ENCODE measurements at regions of chr20 and their contacts with region 1.

Region 1: GRCh38 chr20:13784893-13785715 is at the starts of genes ESF1 and NDUFAF5:
- DNase-seq: peak; percentile 92
- ATAC-seq: peak; percentile 88
- H3K4me3 Mint-ChIP-seq: peak within 1 kb of the TSS; percentile 99
- H3K27ac Mint-ChIP-seq: peak within 1 kb of the TSS; percentile 99
- H3K4me1 Mint-ChIP-seq: peaks cover 22% of the 10 kb centered on the region
- H3K27me3 Mint-ChIP-seq: no peaks in the 10 kb centered on the region
- CTCF ChIP-seq: no peak
- total RNA-seq, gene ESF1: 25.3 to 28.7 TPM (median 26.2 TPM) in 3 replicates
- total RNA-seq, gene NDUFAF5: 22.4 to 31.8 TPM (median 29.1 TPM) in 3 replicates

Region 2: GRCh38 chr20:13610184-13610583 is 174.9 kb before region 1 on chr20:
- CTCF ChIA-PET with region 1: interaction called, 14 read pairs
- POLR2A ChIA-PET with region 1: no interaction called
- DNase-seq: peak; percentile 47
- ATAC-seq: peak; percentile 96
- H3K4me3 Mint-ChIP-seq: no peak overlapping the region
- H3K27ac Mint-ChIP-seq: no peak overlapping the region
- H3K4me1 Mint-ChIP-seq: no peaks in the 10 kb centered on the region; the same call in 1 of the 2 replicates
- H3K27me3 Mint-ChIP-seq: no peaks in the 10 kb centered on the region
- CTCF ChIP-seq: 0 out of 2 replicates have a peak, but pooled peaks have one; percentile 30

Region 3: GRCh38 chr20:13771853-13772453 is 13.2 kb before region 1 on chr20:
- CTCF ChIA-PET with region 1: interaction called, 16 read pairs
- POLR2A ChIA-PET with region 1: no interaction called
- DNase-seq: no peak
- ATAC-seq: no peak
- H3K4me3 Mint-ChIP-seq: no peak overlapping the region
- H3K27ac Mint-ChIP-seq: no peak overlapping the region
- H3K4me1 Mint-ChIP-seq: no peaks in the 10 kb centered on the region
- H3K27me3 Mint-ChIP-seq: no peaks in the 10 kb centered on the region
- CTCF ChIP-seq: peak; percentile 19; the same call in 1 of the 2 replicates